Activated CD4-positive, alpha-beta memory T cell treated with anti-CD3 and anti-CD28 coated beads, Interleukin-2, amount 10 ng/mL, durations not matched to agents 7 days and 5 days (primary cell): ENCODE measurements at regions of chr11 and their contacts with region 1.

Region 1: GRCh38 chr11:8192016-8192895 is 23.4 kb upstream of the RIC3 start:
- DNase-seq: peak; percentile 41
- H3K4me3 Mint-ChIP-seq: no peak overlapping the region
- H3K27ac Mint-ChIP-seq: no peak overlapping the region
- H3K4me1 Mint-ChIP-seq: no peaks in the 10 kb centered on the region
- H3K27me3 Mint-ChIP-seq: peaks cover 18% of the 10 kb centered on the region

Region 2: DNA sequence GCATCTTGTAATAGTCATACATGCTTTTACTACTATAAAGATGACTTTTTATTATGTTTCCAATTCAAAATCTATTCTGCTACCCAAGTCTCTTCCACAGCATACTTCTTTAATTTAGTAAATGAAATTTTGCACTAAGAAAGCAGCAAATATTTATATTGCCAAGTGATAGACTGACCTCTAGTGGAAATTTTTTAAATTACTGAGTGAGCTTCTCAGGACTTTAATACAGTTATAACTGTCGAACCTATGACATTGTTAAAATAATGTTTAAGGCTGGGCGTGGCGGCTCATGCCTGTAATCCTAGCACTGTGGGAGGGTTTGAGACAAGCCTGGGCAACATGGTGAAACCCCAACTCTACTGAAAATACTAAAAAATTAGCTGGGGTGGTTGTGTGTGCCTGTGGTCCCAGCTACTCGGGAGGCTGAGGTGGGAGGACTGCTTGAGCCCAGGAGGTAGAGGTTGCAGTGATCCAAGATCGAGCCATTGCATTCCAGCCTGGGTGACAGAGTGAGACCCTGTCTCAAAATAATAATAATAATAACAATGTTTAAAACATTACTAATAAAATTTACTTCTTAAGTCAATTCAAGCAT is 374.5 kb after region 1 on chr11:
- CTCF ChIA-PET with region 1: interaction called, 11 read pairs
- POLR2A ChIA-PET with region 1: no interaction called
- DNase-seq: no peak
- H3K4me3 Mint-ChIP-seq: no peak overlapping the region
- H3K27ac Mint-ChIP-seq: no peak overlapping the region
- H3K4me1 Mint-ChIP-seq: no peaks in the 10 kb centered on the region
- H3K27me3 Mint-ChIP-seq: peaks cover 35% of the 10 kb centered on the region